PC-9 (cell line): ENCODE measurements at regions of chr12 and their contacts with region 1.

Region 1: GRCh38 chr12:55188974-55189556 is 31.8 kb upstream of the OR10A7 start:
- DNase-seq: peak; percentile 26 to 62
- H3K4me3 ChIP-seq: no peak overlapping the region
- H3K27ac ChIP-seq: no peak overlapping the region
- H3K4me1 ChIP-seq: no peaks in the 10 kb centered on the region
- H3K27me3 ChIP-seq: no peaks in the 10 kb centered on the region
- CTCF ChIP-seq: peak; percentile 86

Region 2: DNA sequence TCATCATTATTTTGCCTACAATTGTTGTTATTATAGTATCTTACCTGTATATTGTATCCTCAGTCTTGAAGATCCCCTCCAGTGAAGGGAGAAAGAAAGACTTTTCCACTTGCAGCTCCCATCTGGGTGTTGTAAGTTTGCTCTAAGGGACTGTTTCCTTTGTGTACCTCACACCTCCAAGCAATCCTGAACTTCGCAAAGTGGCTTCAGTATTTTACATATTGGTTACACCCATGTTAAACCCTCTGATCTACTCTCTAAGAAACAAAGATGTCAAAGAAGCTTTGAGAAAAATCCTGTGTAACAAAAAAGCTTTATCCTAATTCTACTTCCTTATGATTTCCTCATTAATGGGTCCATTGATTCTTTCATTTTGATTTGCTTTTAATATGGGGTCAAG is 72.9 kb before region 1 on chr12:
- CTCF ChIA-PET with region 1: no interaction called
- POLR2A ChIA-PET with region 1: no interaction called
- intact Hi-C with region 1: no loop called
- DNase-seq: no peak
- H3K4me3 ChIP-seq: no peak overlapping the region
- H3K27ac ChIP-seq: no peak overlapping the region
- H3K4me1 ChIP-seq: no peaks in the 10 kb centered on the region
- H3K27me3 ChIP-seq: peaks cover 29% of the 10 kb centered on the region
- CTCF ChIP-seq: no peak

Region 3: GRCh38 chr12:55132816-55133215 is 56.2 kb before region 1 on chr12:
- CTCF ChIA-PET with region 1: no interaction called
- POLR2A ChIA-PET with region 1: no interaction called
- intact Hi-C with region 1: no loop called
- DNase-seq: no peak
- H3K4me3 ChIP-seq: no peak overlapping the region
- H3K27ac ChIP-seq: no peak overlapping the region
- H3K4me1 ChIP-seq: no peaks in the 10 kb centered on the region
- H3K27me3 ChIP-seq: no peaks in the 10 kb centered on the region
- CTCF ChIP-seq: no peak

Region 4: GRCh38 chr12:55619354-55620138 is 430.5 kb after region 1 on chr12:
- CTCF ChIA-PET with region 1: no interaction called
- POLR2A ChIA-PET with region 1: no interaction called
- intact Hi-C with region 1: loop called (anchors 1 kb)
- DNase-seq: peak; percentile 47 to 88
- H3K4me3 ChIP-seq: no peak overlapping the region
- H3K27ac ChIP-seq: no peak overlapping the region
- H3K4me1 ChIP-seq: no peaks in the 10 kb centered on the region
- H3K27me3 ChIP-seq: peaks cover 14% of the 10 kb centered on the region; the same call in 1 of the 2 replicates
- CTCF ChIP-seq: peak; percentile 92

Region 5: DNA sequence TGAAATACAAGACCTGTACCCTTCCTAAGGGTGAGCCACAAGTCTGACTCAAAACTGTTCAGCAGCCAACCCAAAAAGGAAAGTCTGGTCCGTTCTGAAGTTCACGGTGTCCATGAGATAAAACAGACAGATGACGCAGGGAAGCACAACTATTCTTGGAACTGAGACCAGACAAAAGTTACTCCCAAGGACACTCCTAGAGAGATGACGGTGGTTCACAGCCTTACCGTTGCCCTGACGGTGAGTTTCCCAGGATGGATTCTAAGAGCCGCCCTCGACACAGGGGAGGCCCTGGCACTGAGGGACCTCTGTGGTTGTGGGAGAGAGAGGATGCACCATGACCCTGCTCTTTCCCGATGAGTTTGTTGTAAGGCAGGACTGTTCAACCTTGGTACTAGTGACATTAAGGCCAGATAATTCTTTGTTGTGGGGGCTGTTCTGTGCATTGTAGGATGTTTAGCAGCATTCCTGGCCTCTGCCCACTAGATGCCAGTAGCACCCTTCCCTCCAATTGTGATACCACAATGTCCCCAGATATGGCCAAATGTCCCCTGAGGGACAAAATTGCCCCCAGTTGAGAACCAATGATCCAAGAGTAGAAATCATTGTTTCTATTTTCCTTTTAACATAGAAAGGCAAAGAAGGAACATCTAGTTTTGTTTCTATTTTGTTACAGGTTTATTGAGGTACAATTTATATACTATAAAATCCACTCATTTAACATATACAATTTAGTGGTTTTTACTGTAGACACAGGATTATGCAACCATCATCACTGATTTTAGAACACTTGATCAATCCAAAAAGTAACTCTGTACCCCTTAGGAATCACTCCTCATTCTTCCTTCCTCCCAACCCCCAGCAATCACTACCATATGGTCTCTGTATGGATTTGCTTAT is 470.7 kb after region 1 on chr12:
- CTCF ChIA-PET with region 1: no interaction called
- POLR2A ChIA-PET with region 1: no interaction called
- intact Hi-C with region 1: loop called (anchors 1 kb)
- DNase-seq: peak in 1 of 2 experiments; percentile 14
- H3K4me3 ChIP-seq: no peak overlapping the region
- H3K27ac ChIP-seq: no peak overlapping the region
- H3K4me1 ChIP-seq: no peaks in the 10 kb centered on the region
- H3K27me3 ChIP-seq: peaks cover 5% of the 10 kb centered on the region; the same call in 1 of the 2 replicates
- CTCF ChIP-seq: peak; percentile 58